ENCODE measurements at regions of chr7 and their contacts with region 1.

Region 1: GRCh38 chr7:107090457-107090856 is 46.0 kb downstream of the PRKAR2B start:
- DNase-seq: peak; percentile 98
- H3K4me3 ChIP-seq: peak overlapping the region; percentile 83
- H3K27ac ChIP-seq: peak overlapping the region; percentile 100
- H3K4me1 ChIP-seq: peaks cover 72% of the 10 kb centered on the region
- CTCF ChIP-seq: no peak; the same call in 1 of the 2 replicates

Region 2: GRCh38 chr7:106568680-106569499 is 521.6 kb before region 1 on chr7:
- CTCF ChIA-PET with region 1: no interaction called
- POLR2A ChIA-PET with region 1: no interaction called
- intact Hi-C with region 1: no loop called
- DNase-seq: peak; percentile 45
- H3K4me3 ChIP-seq: no peak overlapping the region
- H3K27ac ChIP-seq: no peak overlapping the region
- H3K4me1 ChIP-seq: no peaks in the 10 kb centered on the region
- CTCF ChIP-seq: no peak

Region 3: GRCh38 chr7:106865130-106866041 is 225.1 kb before region 1 on chr7 and contains the start of gene PIK3CG:
- CTCF ChIA-PET with region 1: no interaction called
- POLR2A ChIA-PET with region 1: interaction called, 4 read pairs
- intact Hi-C with region 1: loop called (anchors 5 kb)
- DNase-seq: peak; percentile 87
- H3K4me3 ChIP-seq: peak within 1 kb of the TSS; percentile 82
- H3K27ac ChIP-seq: peak within 1 kb of the TSS; percentile 86
- H3K4me1 ChIP-seq: peaks cover 44% of the 10 kb centered on the region
- CTCF ChIP-seq: no peak
- total RNA-seq, gene PIK3CG: 21.1 and 22.8 TPM in 2 replicates

Region 4: DNA sequence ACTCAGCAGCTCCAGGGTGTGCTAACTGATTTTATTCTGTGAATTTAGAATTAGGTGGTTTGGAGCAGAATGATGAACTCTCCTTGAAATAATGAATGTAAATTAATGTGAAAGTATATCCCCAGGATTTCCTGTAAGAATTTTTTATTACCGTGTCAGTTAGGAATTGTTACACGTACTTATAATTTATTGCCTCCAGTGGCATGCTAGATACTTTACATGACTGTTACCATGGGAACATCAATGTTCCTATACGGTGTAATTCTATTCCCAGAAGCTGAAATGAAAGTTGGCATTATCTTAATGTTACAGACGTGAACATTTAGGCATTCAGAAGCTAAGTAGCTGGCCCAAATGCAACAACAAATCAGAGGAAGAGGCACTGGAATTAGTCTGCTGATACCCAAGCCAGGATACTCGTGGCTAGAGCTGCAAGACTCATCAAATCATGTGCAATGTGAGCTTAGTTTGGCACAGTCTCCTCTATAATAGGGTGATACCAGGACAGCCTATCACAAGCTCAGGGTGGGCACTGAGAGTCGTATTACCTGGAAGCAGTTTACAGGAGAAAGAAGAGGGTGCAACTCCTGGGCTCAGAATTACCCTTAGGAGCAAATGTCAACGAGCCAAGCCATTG is 76.0 kb before region 1 on chr7:
- CTCF ChIA-PET with region 1: no interaction called
- POLR2A ChIA-PET with region 1: no interaction called
- intact Hi-C with region 1: no loop called
- DNase-seq: no peak
- H3K4me3 ChIP-seq: no peak overlapping the region
- H3K27ac ChIP-seq: no peak overlapping the region
- H3K4me1 ChIP-seq: no peaks in the 10 kb centered on the region
- CTCF ChIP-seq: no peak

Region 5: DNA sequence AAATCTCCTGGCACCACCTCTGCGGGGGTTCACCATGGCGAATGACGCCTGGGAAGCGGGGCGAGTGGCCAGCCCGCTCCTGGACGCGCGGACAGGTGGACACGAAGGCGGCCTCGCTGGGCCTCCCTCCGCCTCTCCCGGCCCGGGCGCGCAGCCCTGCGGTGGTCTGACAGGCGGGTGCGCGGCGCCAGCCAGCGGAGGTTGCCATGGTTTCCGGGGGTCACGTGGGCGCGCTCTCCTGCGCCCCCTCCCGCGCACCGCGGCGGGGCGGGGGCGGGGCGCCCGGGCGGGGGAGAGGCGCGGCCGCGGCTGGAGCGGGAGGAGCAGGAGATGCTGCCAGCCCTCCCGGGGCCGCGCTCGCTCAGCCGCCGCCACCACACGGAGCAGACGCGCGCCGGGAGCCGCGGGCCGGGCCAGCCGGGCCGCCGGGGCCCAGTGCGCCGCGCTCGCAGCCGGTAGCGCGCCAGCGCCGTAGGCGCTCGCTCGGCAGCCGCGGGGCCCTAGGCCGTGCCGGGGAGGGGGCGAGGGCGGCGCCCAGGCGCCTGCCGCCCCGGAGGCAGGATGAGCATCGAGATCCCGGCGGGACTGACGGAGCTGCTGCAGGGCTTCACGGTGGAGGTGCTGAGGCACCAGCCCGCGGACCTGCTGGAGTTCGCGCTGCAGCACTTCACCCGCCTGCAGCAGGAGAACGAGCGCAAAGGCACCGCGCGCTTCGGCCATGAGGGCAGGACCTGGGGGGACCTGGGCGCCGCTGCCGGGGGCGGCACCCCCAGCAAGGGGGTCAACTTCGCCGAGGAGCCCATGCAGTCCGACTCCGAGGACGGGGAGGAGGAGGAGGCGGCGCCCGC is 45.9 kb before region 1 on chr7 and contains the start of gene PRKAR2B:
- CTCF ChIA-PET with region 1: interaction called, 12 read pairs
- POLR2A ChIA-PET with region 1: interaction called, 29 read pairs
- intact Hi-C with region 1: loop called (anchors 1 kb)
- DNase-seq: peak; percentile 91
- H3K4me3 ChIP-seq: peak within 1 kb of the TSS; percentile 94
- H3K27ac ChIP-seq: peak within 1 kb of the TSS; percentile 59
- H3K4me1 ChIP-seq: peaks cover 37% of the 10 kb centered on the region
- CTCF ChIP-seq: no peak
- total RNA-seq, gene PRKAR2B: 69.0 and 91.1 TPM in 2 replicates

Region 6: GRCh38 chr7:107069457-107069856 is 21.0 kb before region 1 on chr7:
- CTCF ChIA-PET with region 1: interaction called, 4 read pairs
- POLR2A ChIA-PET with region 1: interaction called, 28 read pairs
- intact Hi-C with region 1: loop called (anchors 1 kb)
- DNase-seq: no peak
- H3K4me3 ChIP-seq: peak overlapping the region; percentile 60
- H3K27ac ChIP-seq: peak overlapping the region; percentile 67
- H3K4me1 ChIP-seq: peaks cover 60% of the 10 kb centered on the region
- CTCF ChIP-seq: no peak

Region 7: GRCh38 chr7:107130487-107131225 is 40.2 kb after region 1 on chr7:
- CTCF ChIA-PET with region 1: no interaction called
- POLR2A ChIA-PET with region 1: interaction called, 3 read pairs
- intact Hi-C with region 1: loop called (anchors 2 kb)
- DNase-seq: no peak
- H3K4me3 ChIP-seq: no peak overlapping the region
- H3K27ac ChIP-seq: no peak overlapping the region
- H3K4me1 ChIP-seq: peaks cover 30% of the 10 kb centered on the region
- CTCF ChIP-seq: 0 out of 2 replicates have a peak, but pooled peaks have one; percentile 23

Region 8: DNA sequence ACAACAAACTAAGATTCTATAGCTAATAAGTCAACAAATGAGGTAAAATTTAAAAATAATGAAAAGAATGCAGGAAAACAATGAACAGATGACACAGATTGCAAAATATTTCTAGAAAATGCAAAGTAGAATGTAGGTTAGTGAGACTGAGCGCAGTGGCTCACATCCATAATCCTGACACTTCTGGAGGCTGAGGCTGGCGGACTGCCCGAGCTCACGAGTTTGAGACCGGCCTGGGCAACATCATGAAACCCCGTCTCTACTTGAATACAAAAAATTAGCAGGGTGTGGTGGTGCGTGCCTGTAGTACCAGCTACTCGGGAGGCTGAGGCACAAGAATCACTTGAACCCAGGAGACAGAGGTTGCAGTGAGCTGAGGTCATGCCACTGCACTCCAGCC is 333.4 kb after region 1 on chr7:
- CTCF ChIA-PET with region 1: no interaction called
- POLR2A ChIA-PET with region 1: no interaction called
- intact Hi-C with region 1: no loop called
- DNase-seq: no peak
- H3K4me3 ChIP-seq: no peak overlapping the region
- H3K27ac ChIP-seq: no peak overlapping the region
- H3K4me1 ChIP-seq: no peaks in the 10 kb centered on the region
- CTCF ChIP-seq: no peak

Region 9: GRCh38 chr7:107687656-107688055 is 597.2 kb after region 1 on chr7:
- CTCF ChIA-PET with region 1: no interaction called
- POLR2A ChIA-PET with region 1: no interaction called
- intact Hi-C with region 1: no loop called
- DNase-seq: no peak
- H3K4me3 ChIP-seq: no peak overlapping the region
- H3K27ac ChIP-seq: no peak overlapping the region
- H3K4me1 ChIP-seq: no peaks in the 10 kb centered on the region
- CTCF ChIP-seq: no peak

Measured in OCI-LY7 (cell line).